GM13976 (cell line): ENCODE measurements at regions of chr1 and their contacts with region 1.

Region 1: GRCh38 chr1:156226116-156226538 is 13.3 kb downstream of the PMF1 start:
- DNase-seq: peak; percentile 76
- CTCF ChIP-seq: no peak

Region 2: DNA sequence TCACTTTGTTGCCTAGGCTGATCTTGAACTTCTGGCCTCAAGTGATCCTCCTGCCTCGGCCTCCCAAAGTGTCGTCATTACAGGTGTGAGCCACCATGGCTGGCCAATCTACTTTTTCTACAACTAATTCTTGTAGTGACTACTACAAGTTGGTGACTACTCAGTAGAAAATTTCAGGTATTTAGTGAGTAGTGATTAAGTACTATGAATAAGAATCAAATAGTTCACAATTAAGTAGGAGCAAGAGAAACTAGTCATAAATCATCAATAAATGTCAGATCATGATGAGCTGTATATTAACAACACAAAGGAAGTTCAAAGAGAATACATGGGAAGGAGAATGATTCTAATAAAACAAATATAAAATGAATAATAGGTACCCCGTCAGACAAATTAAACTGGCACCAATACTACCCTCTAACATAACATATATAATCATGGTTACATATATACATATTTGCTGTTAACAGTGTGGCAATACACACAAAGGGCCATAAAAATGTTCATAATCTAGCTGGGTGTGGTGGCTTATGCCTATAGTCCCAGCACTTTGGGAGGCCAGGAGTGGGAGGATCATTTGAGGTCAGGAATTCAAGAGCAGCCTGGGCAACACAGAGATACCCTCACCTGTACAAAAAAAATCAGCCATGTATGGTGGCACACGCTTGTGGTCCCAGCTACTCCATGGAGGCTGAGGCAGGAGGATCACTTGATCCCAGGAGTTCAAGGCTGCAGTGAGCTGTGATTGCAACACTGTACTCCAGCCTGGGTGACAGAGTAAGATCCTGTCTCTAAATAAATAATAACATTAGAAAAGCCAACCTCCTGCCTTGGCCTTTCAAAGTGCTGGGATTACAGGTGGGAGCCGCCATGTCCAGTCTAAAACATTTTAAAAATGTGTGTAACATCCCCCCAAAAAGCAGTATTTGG is 556.6 kb before region 1 on chr1:
- in situ Hi-C with region 1: no loop called
- DNase-seq: no peak
- CTCF ChIP-seq: no peak

Region 3: GRCh38 chr1:156096640-156097391 is 129.3 kb before region 1 on chr1:
- in situ Hi-C with region 1: loop called (anchors 10 kb)
- DNase-seq: peak; percentile 88
- CTCF ChIP-seq: peak; percentile 90

Region 4: DNA sequence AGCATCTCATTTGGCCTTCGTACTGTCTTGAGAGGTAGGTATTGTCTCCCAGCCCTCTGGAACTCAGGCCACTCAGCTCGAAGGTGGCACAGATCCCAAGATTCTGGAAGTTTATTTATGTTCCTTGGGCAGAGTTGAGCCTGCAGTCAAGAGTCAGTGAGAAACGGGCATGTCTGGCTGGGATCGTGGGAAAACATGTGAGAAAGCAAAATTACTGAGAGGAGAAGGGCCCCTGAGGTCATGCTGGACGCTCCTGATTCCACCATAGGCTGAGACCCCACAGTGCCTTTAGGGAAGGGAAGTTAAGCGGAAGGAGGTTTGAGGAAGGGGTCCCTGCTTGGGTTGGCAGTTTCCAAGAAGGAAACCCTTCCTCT is 85.3 kb before region 1 on chr1:
- in situ Hi-C with region 1: loop called (anchors 5 kb)
- DNase-seq: no peak
- CTCF ChIP-seq: no peak

Region 5: GRCh38 chr1:156154317-156154749 is 71.8 kb before region 1 on chr1:
- in situ Hi-C with region 1: no loop called
- DNase-seq: peak; percentile 72
- CTCF ChIP-seq: no peak